Activated CD4-positive, alpha-beta memory T cell treated with anti-CD3 and anti-CD28 coated beads for 36 hours (primary cell): ENCODE measurements at regions of chr11 and their contacts with region 1.

Region 1: GRCh38 chr11:76207642-76208401 is 1.5 kb upstream of the WNT11 start:
- DNase-seq: peak; percentile 81
- H3K4me3 Mint-ChIP-seq: peak overlapping the region; percentile 66
- H3K27ac Mint-ChIP-seq: no peak overlapping the region
- H3K4me1 Mint-ChIP-seq: peaks cover 14% of the 10 kb centered on the region
- H3K27me3 Mint-ChIP-seq: peaks cover 51% of the 10 kb centered on the region

Region 2: DNA sequence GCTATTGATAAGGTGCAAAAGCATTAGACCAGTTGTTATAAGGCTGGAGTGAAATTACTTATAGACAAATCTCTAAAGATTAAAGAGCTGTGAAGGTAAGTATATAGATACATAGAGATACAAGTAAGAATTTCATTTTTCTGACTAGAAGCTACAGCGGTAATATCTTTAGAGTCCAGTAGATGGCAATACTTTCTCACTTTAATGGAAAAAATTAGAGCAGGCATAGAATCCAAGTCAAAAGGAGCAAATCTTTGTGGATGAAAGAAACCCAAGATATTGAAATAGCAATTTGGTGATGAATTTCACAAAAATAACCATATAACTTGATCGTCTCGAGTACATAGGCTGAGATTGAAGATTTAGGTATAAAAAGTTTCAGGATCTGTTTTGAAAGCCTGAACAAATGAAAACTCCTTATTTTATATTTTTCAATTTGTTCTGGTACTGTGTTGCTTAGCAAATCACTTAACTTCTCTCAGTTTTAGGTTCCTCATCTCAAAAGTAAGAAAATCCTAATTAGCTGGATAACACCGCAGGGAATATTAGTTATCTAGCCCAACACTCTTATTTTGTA is 310.9 kb before region 1 on chr11:
- CTCF ChIA-PET with region 1: interaction called, 22 read pairs
- POLR2A ChIA-PET with region 1: no interaction called
- intact Hi-C with region 1: loop called (anchors 5 kb)
- DNase-seq: no peak
- H3K4me3 Mint-ChIP-seq: no peak overlapping the region
- H3K27ac Mint-ChIP-seq: no peak overlapping the region
- H3K4me1 Mint-ChIP-seq: peaks cover 19% of the 10 kb centered on the region
- H3K27me3 Mint-ChIP-seq: no peaks in the 10 kb centered on the region

Region 3: GRCh38 chr11:76224461-76225121 is 16.8 kb after region 1 on chr11:
- CTCF ChIA-PET with region 1: interaction called, 26 read pairs
- POLR2A ChIA-PET with region 1: no interaction called
- intact Hi-C with region 1: no loop called
- DNase-seq: no peak
- H3K4me3 Mint-ChIP-seq: no peak overlapping the region
- H3K27ac Mint-ChIP-seq: no peak overlapping the region
- H3K4me1 Mint-ChIP-seq: no peaks in the 10 kb centered on the region
- H3K27me3 Mint-ChIP-seq: no peaks in the 10 kb centered on the region

Region 4: DNA sequence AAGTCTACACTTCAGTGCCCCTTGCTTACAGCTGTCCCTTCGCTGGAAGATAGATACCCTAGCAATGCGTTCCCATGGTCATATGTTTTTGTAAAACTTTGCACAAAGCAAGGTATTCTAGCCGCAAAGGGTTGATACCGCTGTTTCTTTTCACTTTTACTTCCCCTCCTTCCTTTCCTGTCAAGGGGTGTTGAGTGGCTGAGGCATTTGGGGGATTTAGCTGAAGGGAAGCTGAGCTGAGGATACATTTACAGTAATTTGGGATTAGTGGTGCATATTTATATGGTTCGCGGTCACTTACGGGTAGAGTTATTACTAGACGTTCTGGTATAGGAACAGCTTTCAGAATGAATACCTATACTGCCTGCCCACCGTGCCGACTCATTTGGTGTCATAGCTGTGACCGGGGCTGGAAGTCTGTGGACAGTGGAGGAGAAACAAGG is 85.4 kb after region 1 on chr11:
- CTCF ChIA-PET with region 1: interaction called, 18 read pairs
- POLR2A ChIA-PET with region 1: no interaction called
- intact Hi-C with region 1: no loop called
- DNase-seq: peak; percentile 70
- H3K4me3 Mint-ChIP-seq: no peak overlapping the region
- H3K27ac Mint-ChIP-seq: no peak overlapping the region
- H3K4me1 Mint-ChIP-seq: peaks cover 16% of the 10 kb centered on the region
- H3K27me3 Mint-ChIP-seq: no peaks in the 10 kb centered on the region

Region 5: GRCh38 chr11:76329084-76329984 is 121.5 kb after region 1 on chr11:
- CTCF ChIA-PET with region 1: interaction called, 241 read pairs
- POLR2A ChIA-PET with region 1: interaction called, 3 read pairs
- intact Hi-C with region 1: no loop called
- DNase-seq: no peak
- H3K4me3 Mint-ChIP-seq: no peak overlapping the region
- H3K27ac Mint-ChIP-seq: no peak overlapping the region
- H3K4me1 Mint-ChIP-seq: no peaks in the 10 kb centered on the region
- H3K27me3 Mint-ChIP-seq: peaks cover 2% of the 10 kb centered on the region

Region 6: DNA sequence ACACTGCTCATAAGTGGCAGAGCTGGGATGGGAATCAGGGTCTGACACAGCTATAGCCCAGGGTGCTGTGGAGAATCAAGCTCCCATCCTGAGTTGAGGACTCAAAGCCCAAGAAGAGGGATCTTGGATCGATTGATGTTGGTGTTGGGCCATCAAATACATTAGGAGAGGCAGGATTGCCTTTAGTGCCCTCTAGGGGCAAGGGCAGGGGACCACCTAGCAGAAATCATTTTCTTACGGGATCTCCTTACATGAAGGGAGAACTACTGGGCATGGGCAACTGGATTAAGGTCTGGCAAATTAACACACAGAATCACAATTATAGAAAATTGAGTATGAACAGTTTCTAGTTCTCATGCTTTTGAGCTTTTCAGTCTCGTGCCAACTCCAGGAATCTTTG is 212.1 kb after region 1 on chr11:
- CTCF ChIA-PET with region 1: interaction called, 10 read pairs
- POLR2A ChIA-PET with region 1: no interaction called
- intact Hi-C with region 1: loop called (anchors 10 kb)
- DNase-seq: peak; percentile 30
- H3K4me3 Mint-ChIP-seq: no peak overlapping the region
- H3K27ac Mint-ChIP-seq: no peak overlapping the region
- H3K4me1 Mint-ChIP-seq: peaks cover 11% of the 10 kb centered on the region
- H3K27me3 Mint-ChIP-seq: peaks cover 11% of the 10 kb centered on the region

Region 7: DNA sequence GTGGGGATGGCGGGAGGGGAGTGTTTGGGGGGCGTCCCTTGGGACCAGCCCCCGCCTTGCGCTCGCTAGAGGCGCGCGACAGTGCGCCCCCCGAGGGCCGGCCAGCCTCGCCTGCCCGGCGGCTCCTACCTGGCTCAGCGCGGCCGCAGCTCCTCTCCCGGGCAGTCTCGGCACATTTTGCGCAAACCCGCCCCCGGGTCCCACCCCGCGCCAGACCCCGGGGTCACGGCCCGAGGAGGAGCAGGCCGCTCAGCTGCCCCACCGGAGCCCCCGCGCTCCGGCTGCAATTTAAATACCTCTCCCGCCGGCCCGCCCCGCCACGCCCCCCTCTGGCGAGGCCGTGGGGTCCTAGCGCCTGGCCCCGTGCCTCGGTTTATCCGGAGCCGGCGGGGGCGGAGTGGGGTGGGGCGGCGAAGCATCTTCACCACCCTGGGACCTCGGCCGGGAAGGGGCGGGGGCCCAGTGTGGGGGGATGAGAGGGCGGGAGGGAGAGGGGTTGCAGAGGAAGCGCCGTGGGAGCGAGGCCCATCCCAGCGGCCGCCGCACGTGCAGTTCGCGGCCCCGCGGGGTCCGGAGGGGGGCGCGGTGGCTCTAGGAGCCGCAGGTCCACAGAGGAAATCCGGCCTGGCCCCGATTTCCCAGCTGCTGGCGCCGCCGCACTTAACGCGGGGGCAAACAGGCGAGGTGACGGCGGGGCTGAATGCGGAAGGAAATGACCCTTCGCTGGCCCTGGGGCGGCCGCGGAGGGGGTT is 462.8 kb after region 1 on chr11 and contains the start of gene LRRC32:
- CTCF ChIA-PET with region 1: interaction called, 14 read pairs
- POLR2A ChIA-PET with region 1: interaction called, 3 read pairs
- intact Hi-C with region 1: no loop called
- DNase-seq: peak; percentile 35
- H3K4me3 Mint-ChIP-seq: peak within 1 kb of the TSS; percentile 65
- H3K27ac Mint-ChIP-seq: no peak within 1 kb of the TSS
- H3K4me1 Mint-ChIP-seq: peaks cover 28% of the 10 kb centered on the region
- H3K27me3 Mint-ChIP-seq: peaks cover 22% of the 10 kb centered on the region
- total RNA-seq, gene LRRC32: 11.2 to 12.3 TPM